ENCODE measurements at regions of chr2 and their contacts with region 1.

Region 1: DNA sequence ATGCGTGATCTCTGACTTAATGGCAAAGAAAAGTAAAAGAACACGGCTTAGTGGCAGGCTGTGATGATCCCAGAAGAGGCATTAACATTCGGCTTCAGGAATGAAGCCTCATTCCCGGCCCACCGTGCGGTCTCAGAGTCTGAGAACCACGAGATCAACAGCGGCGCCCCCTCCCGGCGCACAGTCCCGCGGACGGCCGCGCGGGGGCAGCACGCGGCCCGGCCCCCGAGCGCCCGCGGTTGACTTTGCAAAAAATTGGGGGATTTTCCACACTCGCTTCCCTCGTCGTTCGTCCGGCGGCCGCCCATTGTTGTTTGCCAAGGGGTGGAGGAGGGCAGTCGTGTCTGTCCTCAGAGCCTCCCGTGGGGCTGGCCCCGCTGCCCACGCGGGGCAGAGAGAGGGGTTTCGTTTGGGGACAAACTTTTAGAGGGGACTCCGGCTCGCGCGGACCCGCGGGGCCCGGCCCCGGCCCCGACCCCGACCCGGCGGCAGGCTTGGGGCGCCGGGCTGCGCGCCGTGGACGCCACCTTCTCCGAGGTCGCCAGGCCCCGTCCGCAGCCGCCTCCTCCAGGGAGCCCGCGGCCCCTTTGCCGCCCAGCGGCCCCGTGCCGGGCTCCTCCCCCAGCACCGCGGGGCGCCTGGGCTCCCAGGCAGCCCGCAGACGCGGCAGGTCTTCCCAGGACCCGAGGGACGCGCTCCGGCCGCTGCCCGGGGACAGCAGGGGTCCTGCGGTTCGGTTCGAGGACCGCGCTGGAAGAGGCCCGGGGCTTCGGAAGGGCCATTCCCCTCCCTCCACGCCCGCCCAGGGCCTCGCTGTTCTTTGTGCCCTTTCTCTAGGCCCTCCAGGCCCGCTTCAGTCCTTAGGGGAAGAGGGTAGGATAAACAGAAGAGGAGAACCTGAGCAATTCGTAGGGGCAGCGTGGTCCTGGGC is 3.4 kb upstream of the HS6ST1 start:
- DNase-seq: peak; percentile 58 to 87 (median 76)
- ATAC-seq: peak; percentile 76
- H3K4me3 ChIP-seq: peak overlapping the region; percentile 68
- H3K4me3 Mint-ChIP-seq: peak overlapping the region; percentile 70 to 92 (median 76)
- H3K27ac ChIP-seq: peak overlapping the region; percentile 64
- H3K27ac Mint-ChIP-seq: peak overlapping the region in 6 of 9 donors; percentile 28 to 80 (median 50)
- H3K4me1 ChIP-seq: peaks cover 10 to 18% of the 10 kb centered on the region in 2 donors
- H3K4me1 Mint-ChIP-seq: peaks cover 10 to 24% (median 14%) of the 10 kb centered on the region in 7 donors
- H3K27me3 ChIP-seq: no peaks in the 10 kb centered on the region
- H3K27me3 Mint-ChIP-seq: peaks cover 0 to 16% (median 0%) of the 10 kb centered on the region in 5 donors

Region 2: GRCh38 chr2:128090945-128091725 is 230.9 kb before region 1 on chr2 and contains the start of gene UGGT1:
- CTCF ChIA-PET with region 1: no interaction called
- POLR2A ChIA-PET with region 1: no interaction called
- intact Hi-C with region 1: loop called in 1 of 2 experiments (anchors 10 kb)
- DNase-seq: peak; percentile 75 to 94 (median 92)
- ATAC-seq: peak; percentile 99
- H3K4me3 ChIP-seq: peak within 1 kb of the TSS; percentile 86
- H3K4me3 Mint-ChIP-seq: peak within 1 kb of the TSS; percentile 88 to 98 (median 94)
- H3K27ac ChIP-seq: peak within 1 kb of the TSS; percentile 75
- H3K27ac Mint-ChIP-seq: peak within 1 kb of the TSS; percentile 91 to 97 (median 94)
- H3K4me1 ChIP-seq: peaks cover 13 to 18% of the 10 kb centered on the region in 2 donors
- H3K4me1 Mint-ChIP-seq: peaks cover 27 to 60% (median 56%) of the 10 kb centered on the region in 7 donors
- H3K27me3 ChIP-seq: no peaks in the 10 kb centered on the region
- H3K27me3 Mint-ChIP-seq: no peaks in the 10 kb centered on the region
- total RNA-seq, gene UGGT1: 38.1 to 75.6 (median 46.6) TPM

Region 3: DNA sequence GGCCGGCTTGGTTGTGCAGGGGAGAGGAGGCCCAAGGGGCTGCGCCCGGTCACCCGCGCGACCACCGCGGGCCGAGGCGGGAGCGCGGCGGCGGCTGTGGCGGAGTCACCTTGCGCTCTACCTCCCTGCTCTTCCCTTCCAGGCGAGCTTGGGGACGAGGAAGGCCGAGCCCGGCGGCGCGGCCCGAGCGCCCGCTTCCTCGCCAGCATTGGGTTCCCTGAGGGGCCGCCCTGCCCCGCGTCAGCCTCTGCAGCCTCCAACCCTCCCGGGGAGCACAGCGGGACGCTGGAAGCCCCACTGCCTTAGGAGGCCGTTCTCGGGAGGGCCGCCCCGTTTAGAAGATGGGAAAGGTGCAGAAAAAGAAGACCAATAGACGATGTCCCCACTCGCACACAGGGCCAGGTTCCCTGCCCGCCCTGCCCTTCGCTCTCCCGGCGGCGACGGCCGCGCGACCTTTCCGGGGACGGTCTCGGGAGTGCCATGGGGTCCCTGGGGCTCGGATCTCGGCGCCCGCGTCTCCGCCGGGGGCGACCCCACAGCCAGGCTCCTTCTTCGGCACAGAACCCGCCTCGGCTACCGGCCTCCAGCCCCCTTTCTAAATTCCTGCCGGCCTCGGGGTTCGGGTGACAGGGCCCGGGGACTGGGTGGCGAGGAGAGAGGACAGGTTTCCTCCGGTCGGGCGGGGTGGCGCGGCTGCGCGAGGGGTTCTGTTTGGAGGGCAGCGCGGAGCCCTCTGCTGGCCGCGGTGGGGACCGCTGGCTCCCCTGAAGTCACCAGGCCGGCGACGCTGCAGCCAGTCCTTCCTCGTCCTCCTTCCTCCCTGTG is 88.9 kb before region 1 on chr2:
- CTCF ChIA-PET with region 1: no interaction called
- POLR2A ChIA-PET with region 1: no interaction called
- intact Hi-C with region 1: loop called (anchors 2 to 5 kb)
- DNase-seq: peak; percentile 54 to 86 (median 74)
- ATAC-seq: peak; percentile 98
- H3K4me3 ChIP-seq: peak overlapping the region; percentile 70
- H3K4me3 Mint-ChIP-seq: peak overlapping the region; percentile 74 to 94 (median 86)
- H3K27ac ChIP-seq: peak overlapping the region; percentile 36
- H3K27ac Mint-ChIP-seq: peak overlapping the region in 1 of 9 donors; percentile 81
- H3K4me1 ChIP-seq: no peaks in the 10 kb centered on the region
- H3K4me1 Mint-ChIP-seq: peaks cover 0 to 6% (median 4%) of the 10 kb centered on the region in 7 donors
- H3K27me3 ChIP-seq: no peaks in the 10 kb centered on the region
- H3K27me3 Mint-ChIP-seq: peaks cover 0 to 21% (median 3%) of the 10 kb centered on the region in 5 donors

Region 4: DNA sequence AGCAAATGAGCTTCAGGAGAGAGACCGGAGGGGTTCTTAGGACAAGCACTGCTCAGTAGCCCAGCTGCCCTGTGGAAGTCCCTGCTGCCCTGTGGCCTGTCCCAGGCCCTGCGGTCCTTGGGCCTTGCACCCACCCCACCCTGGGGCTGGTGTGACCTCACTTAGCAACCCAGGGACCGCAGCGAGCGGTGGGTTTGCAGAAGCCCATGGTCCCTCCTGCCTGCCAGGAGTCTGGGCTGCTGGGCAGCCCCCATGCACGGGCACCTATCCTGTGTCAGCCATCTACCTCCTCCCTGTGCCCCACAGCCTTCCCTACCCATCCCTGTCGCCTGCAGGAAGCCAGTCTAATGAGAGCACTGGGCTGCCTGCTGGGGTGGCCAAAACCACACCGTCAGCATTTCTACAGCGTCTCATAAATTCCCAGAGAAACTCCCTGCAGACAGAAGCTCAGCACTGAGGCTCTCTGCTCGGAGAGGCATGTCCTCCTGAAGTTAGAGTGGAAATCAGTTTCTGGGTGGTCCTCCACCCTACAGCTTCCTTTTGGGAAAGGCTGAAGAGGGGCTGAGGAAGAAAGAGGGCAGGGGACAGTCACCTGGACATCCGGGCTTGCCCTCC is 227.7 kb after region 1 on chr2:
- CTCF ChIA-PET with region 1: no interaction called
- POLR2A ChIA-PET with region 1: no interaction called
- intact Hi-C with region 1: no loop called
- DNase-seq: peak in 1 of 9 donors; percentile 17
- ATAC-seq: no peak
- H3K4me3 ChIP-seq: no peak overlapping the region
- H3K4me3 Mint-ChIP-seq: no peak overlapping the region
- H3K27ac ChIP-seq: no peak overlapping the region
- H3K27ac Mint-ChIP-seq: no peak overlapping the region
- H3K4me1 ChIP-seq: no peaks in the 10 kb centered on the region
- H3K4me1 Mint-ChIP-seq: no peaks in the 10 kb centered on the region
- H3K27me3 ChIP-seq: no peaks in the 10 kb centered on the region
- H3K27me3 Mint-ChIP-seq: peaks cover 0 to 7% (median 0%) of the 10 kb centered on the region in 5 donors

Region 5: GRCh38 chr2:128686881-128687555 is 365.0 kb after region 1 on chr2:
- CTCF ChIA-PET with region 1: no interaction called
- POLR2A ChIA-PET with region 1: no interaction called
- intact Hi-C with region 1: no loop called
- DNase-seq: no peak
- ATAC-seq: no peak
- H3K4me3 ChIP-seq: no peak overlapping the region
- H3K4me3 Mint-ChIP-seq: no peak overlapping the region
- H3K27ac ChIP-seq: no peak overlapping the region
- H3K27ac Mint-ChIP-seq: no peak overlapping the region
- H3K4me1 ChIP-seq: no peaks in the 10 kb centered on the region
- H3K4me1 Mint-ChIP-seq: peaks cover 0 to 26% (median 3%) of the 10 kb centered on the region in 7 donors
- H3K27me3 ChIP-seq: no peaks in the 10 kb centered on the region
- H3K27me3 Mint-ChIP-seq: peaks cover 3 to 13% (median 4%) of the 10 kb centered on the region in 5 donors

Region 6: GRCh38 chr2:129396980-129397599 is 1075.0 kb after region 1 on chr2:
- CTCF ChIA-PET with region 1: no interaction called
- POLR2A ChIA-PET with region 1: no interaction called
- intact Hi-C with region 1: loop called in 1 of 2 experiments (anchors 5 kb)
- DNase-seq: no peak
- ATAC-seq: no peak
- H3K4me3 ChIP-seq: no peak overlapping the region
- H3K4me3 Mint-ChIP-seq: no peak overlapping the region
- H3K27ac ChIP-seq: no peak overlapping the region
- H3K27ac Mint-ChIP-seq: no peak overlapping the region
- H3K4me1 ChIP-seq: no peaks in the 10 kb centered on the region
- H3K4me1 Mint-ChIP-seq: no peaks in the 10 kb centered on the region
- H3K27me3 ChIP-seq: no peaks in the 10 kb centered on the region
- H3K27me3 Mint-ChIP-seq: no peaks in the 10 kb centered on the region

Region 7: GRCh38 chr2:129877289-129877779 is 1555.3 kb after region 1 on chr2:
- CTCF ChIA-PET with region 1: no interaction called
- POLR2A ChIA-PET with region 1: no interaction called
- intact Hi-C with region 1: loop called in 1 of 2 experiments (anchors 10 kb)
- DNase-seq: peak; percentile 61 to 82 (median 78)
- ATAC-seq: peak; percentile 95
- H3K4me3 ChIP-seq: peak overlapping the region; percentile 96
- H3K4me3 Mint-ChIP-seq: peak overlapping the region; percentile 86 to 99 (median 96)
- H3K27ac ChIP-seq: peak overlapping the region; percentile 78
- H3K27ac Mint-ChIP-seq: peak overlapping the region; percentile 77 to 97 (median 92)
- H3K4me1 ChIP-seq: peaks cover 5 to 7% of the 10 kb centered on the region in 2 donors
- H3K4me1 Mint-ChIP-seq: peaks cover 6 to 18% (median 13%) of the 10 kb centered on the region in 7 donors
- H3K27me3 ChIP-seq: no peaks in the 10 kb centered on the region
- H3K27me3 Mint-ChIP-seq: peaks cover 0 to 2% (median 0%) of the 10 kb centered on the region in 5 donors

Measured in naive thymus-derived CD4-positive, alpha-beta T cell (primary cell).